Endothelial cell of umbilical vein (primary cell): ENCODE measurements at regions of chr10 and their contacts with region 1.

Region 1: DNA sequence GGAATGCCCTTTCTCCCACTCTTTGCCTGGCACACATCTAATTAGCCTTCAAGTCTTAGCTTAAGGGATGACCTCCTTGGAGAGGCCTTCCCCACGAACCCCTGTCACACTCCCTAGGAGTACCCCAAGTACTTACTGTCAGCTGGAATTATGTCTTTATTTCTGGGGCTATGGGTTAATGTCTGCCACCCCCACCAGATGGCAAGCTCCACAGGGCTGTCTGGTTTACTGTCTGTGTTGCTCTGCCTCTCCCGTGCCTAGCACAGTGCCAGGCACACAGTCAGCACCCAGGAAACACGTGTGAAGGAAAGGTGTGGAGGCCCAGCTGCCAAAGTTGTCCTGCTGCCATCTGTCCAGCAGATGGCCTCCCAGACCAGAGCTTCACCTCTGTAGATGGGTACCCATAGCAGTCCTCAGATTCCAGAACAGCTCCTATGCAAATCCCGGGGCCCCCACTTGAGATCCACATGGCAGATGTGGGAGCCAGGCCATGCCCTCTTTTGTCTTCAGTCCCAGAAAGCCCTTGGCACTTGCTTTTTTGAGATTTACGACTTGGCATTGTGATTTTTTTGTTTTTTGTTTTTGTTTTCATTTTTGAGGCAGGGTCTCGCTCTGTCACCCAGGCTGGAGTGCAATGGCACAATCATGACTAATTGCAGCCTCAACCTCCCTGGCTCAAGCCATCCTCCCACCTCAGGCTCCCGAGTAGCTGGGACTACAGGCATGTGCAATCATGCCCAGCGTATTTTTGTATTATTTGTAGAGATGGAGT is 17.2 kb upstream of the PALD1 start:
- DNase-seq: peak; percentile 49
- H3K4me3 ChIP-seq: no peak overlapping the region
- H3K27ac ChIP-seq: no peak overlapping the region
- H3K4me1 ChIP-seq: no peaks in the 10 kb centered on the region
- H3K27me3 ChIP-seq: peaks cover 0 to 2% of the 10 kb centered on the region in 2 experiments
- CTCF ChIP-seq: peak; percentile 87
- POLR2A ChIP-seq: no peak

Region 2: GRCh38 chr10:70337201-70337651 is 124.2 kb before region 1 on chr10:
- CTCF ChIA-PET with region 1: no interaction called
- POLR2A ChIA-PET with region 1: no interaction called
- dilution Hi-C with region 1: no loop called
- intact Hi-C with region 1: no loop called
- DNase-seq: no peak
- H3K4me3 ChIP-seq: no peak overlapping the region
- H3K27ac ChIP-seq: no peak overlapping the region
- H3K4me1 ChIP-seq: peaks cover under 1% of the 10 kb centered on the region
- H3K27me3 ChIP-seq: peaks cover 3 to 11% of the 10 kb centered on the region in 2 experiments
- CTCF ChIP-seq: no peak
- POLR2A ChIP-seq: no peak

Region 3: DNA sequence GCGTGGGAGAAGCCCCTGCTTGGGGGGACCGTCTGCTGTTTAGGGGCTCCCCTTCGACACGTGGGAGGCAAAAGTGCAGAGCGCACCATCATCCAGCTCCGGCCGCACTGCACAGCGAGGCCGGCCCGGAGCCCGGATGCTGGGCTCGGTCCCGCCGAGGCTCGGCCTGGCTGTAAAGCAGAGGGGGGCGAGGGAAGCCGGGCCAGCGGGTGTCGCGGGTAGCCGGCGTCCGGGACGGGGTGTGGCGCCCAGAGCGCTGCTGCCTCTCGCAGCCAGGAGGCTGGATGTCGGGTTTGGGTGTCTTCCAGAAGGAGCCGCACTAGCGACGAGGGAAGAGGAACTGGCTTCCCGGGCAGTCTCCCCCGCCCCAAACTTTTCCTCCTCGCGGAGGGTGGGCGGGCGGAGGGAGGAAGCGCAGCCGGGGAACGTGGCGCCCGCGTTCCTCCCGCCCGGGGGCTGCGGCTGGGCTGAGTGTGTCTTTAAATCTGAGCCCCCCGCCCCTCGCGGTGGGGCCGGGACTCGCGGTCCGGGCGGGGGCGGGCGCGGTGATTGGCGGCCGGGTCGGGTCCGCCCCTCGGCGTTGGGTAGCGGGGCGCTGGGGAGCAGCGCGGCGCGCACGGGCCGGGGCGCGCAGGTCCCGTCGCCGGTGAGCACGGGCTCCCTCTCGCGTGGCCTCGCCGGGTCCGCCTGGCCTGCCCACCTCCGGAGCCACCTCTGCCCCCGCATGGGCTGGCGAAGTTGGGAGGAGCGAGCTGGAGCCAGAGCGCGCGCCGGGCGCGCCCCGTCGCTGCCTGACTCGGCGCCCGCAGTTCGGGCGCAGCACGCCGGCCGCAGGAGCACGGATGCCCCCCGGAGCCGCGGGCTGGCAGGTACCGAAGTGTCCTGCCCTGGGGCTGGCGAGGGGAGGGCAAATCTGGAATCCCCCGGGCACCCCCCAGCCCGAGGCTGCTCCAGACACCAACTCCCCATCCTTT is 17.1 kb after region 1 on chr10 and contains the start of gene PALD1:
- CTCF ChIA-PET with region 1: interaction called, 16 read pairs
- POLR2A ChIA-PET with region 1: no interaction called
- dilution Hi-C with region 1: no loop called
- intact Hi-C with region 1: no loop called
- DNase-seq: peak; percentile 46
- H3K4me3 ChIP-seq: peak within 1 kb of the TSS; percentile 35 to 71 (median 36)
- H3K27ac ChIP-seq: no peak within 1 kb of the TSS
- H3K4me1 ChIP-seq: peaks cover 44% of the 10 kb centered on the region
- H3K27me3 ChIP-seq: peaks cover 0 to 2% of the 10 kb centered on the region in 2 experiments
- CTCF ChIP-seq: peak in 1 of 2 donors; percentile 8
- POLR2A ChIP-seq: no peak
- total RNA-seq, gene PALD1: 62.1 and 73.3 TPM in 2 replicates

Region 4: DNA sequence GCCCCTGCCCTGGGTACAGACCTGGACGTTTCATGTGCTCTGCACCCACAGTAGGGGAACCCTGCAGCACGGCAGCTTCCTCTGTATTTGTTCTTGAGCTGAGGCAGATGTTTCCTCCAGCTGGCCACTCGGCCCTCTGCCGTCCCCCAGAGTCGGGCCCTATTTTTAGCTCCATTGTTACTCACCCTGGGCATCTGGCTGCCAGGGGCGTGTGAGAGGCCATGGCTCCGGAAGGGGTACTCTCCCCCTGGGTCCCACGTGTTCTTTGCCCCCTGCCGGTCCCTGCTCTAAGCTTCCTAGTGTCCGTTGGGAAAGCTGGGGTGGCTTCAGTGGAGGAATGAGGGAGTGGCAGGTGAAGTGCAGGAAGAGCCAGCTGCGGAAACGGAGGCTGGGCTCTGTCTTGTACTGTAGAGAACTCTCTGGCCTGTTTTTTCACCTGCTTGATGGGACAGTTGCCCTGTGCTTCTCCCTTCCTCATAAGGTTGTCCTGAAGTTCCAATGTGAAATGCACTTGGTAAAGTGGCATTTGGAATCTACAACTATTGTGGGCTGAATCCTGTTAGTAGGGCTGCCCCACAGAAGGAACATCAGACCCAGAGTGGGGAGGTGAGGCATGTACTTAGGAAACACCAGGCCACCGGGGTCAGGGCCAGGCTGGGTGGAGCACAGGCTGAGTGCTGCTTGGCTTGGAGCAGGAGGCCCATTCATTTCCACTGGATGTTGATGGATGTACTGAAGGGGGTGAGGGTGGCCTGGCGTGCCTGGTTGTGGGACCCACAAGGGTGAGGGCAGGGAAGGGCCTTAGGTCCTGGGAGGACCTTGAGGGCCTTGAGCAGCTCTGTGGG is 47.7 kb after region 1 on chr10:
- CTCF ChIA-PET with region 1: interaction called, 16 read pairs
- POLR2A ChIA-PET with region 1: no interaction called
- dilution Hi-C with region 1: no loop called
- intact Hi-C with region 1: no loop called
- DNase-seq: peak; percentile 92
- H3K4me3 ChIP-seq: no peak overlapping the region
- H3K27ac ChIP-seq: peak overlapping the region; percentile 73
- H3K4me1 ChIP-seq: peaks cover 29% of the 10 kb centered on the region
- H3K27me3 ChIP-seq: no peaks in the 10 kb centered on the region
- CTCF ChIP-seq: peak; percentile 9 to 12
- POLR2A ChIP-seq: no peak

Region 5: DNA sequence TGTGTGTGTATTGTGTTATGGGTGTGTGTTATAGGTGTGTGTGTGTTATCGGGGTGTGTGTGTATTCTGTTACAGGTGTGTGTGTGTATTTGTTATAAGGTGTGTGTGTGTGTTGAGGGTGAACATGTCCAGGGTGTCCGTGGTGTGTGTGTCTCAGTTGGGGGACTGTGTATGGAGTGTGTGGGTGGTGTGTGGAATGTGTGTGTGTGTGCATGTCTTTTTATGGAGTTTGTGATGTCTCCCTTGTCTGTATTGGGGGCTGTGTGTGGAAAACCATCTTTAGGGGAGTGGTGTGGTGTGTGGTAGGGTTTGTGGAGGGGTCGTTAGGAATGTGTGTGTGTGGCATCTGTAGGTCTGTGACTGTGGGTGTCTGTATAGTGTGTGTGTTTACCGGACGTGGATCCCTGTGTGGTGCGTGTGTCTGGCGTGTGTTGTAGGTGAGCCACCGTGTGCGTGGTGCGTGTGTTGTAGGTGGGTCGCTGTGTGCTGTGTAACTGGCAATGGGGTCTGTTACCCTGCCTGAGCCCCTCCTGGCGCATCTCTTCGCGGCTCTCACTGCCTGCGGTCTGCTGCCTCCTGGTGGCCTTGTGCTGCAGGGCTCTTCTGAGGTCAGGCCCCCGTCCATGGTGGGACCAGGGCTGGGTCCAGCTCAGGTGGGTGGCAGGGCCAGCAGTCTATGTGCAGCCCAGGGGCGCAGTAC is 78.8 kb after region 1 on chr10:
- CTCF ChIA-PET with region 1: interaction called, 196 read pairs
- POLR2A ChIA-PET with region 1: no interaction called
- dilution Hi-C with region 1: no loop called
- intact Hi-C with region 1: loop called (anchors 1 kb)
- DNase-seq: peak; percentile 24
- H3K4me3 ChIP-seq: no peak overlapping the region
- H3K27ac ChIP-seq: no peak overlapping the region
- H3K4me1 ChIP-seq: no peaks in the 10 kb centered on the region
- H3K27me3 ChIP-seq: no peaks in the 10 kb centered on the region
- CTCF ChIP-seq: peak; percentile 78 to 84
- POLR2A ChIP-seq: no peak

Region 6: DNA sequence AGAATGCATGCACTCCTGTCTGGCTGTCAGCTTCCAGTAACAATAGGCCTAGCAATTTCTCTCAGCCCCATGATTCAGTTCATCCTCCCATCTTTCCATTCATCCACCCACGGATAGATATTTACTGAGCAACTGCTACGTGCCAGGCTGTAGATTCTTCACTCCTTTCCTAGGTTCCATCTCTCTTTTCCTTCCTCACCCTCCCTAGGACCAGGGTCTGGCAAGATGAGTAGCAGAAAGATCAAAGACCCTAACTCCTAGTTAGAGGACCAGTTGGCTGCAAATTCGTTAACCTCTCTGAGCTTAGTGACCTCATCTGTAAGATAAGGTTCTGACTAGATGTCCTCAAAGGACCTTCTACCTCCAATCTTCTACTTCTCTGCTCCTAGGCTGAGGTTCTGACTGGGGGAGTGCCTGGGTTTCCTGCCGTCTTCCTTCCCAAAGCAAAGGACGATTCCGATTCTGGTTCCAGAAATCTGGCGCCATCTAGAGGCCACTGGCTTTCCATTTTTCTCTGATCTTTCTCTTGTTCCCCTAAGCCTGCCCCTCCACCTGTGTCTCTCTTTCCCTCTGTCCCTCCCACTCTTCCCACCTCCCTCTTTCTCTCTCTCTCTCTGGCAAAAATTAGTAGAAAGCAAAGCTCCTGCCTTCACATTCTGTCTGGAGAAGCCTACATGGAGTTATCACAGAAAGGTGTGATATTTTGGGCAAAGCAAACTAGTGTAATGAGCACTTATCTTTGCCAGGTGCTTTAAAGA is 297.5 kb after region 1 on chr10:
- CTCF ChIA-PET with region 1: interaction called, 32 read pairs
- POLR2A ChIA-PET with region 1: no interaction called
- dilution Hi-C with region 1: no loop called
- intact Hi-C with region 1: loop called (anchors 1 kb)
- DNase-seq: peak; percentile 52
- H3K4me3 ChIP-seq: no peak overlapping the region
- H3K27ac ChIP-seq: no peak overlapping the region
- H3K4me1 ChIP-seq: no peaks in the 10 kb centered on the region
- H3K27me3 ChIP-seq: peaks cover 0 to 6% of the 10 kb centered on the region in 2 experiments
- CTCF ChIP-seq: peak; percentile 71 to 74
- POLR2A ChIP-seq: no peak

Region 7: GRCh38 chr10:71396084-71396720 is 934.8 kb after region 1 on chr10:
- CTCF ChIA-PET with region 1: no interaction called
- POLR2A ChIA-PET with region 1: no interaction called
- dilution Hi-C with region 1: no loop called
- intact Hi-C with region 1: no loop called
- DNase-seq: no peak
- H3K4me3 ChIP-seq: no peak overlapping the region
- H3K27ac ChIP-seq: no peak overlapping the region
- H3K4me1 ChIP-seq: no peaks in the 10 kb centered on the region
- H3K27me3 ChIP-seq: peaks cover 49 to 61% of the 10 kb centered on the region in 2 experiments
- CTCF ChIP-seq: peak in 1 of 2 donors; percentile 30
- POLR2A ChIP-seq: no peak